ENCODE measurements at regions of chr2 and their contacts with region 1.

Region 1: GRCh38 chr2:95389245-95390119 is 13.0 kb upstream of the FAHD2A start:
- DNase-seq: peak; percentile 49
- ATAC-seq: peak; percentile 97
- H3K4me3 ChIP-seq: no peak overlapping the region
- H3K27ac ChIP-seq: no peak overlapping the region
- H3K4me1 ChIP-seq: no peaks in the 10 kb centered on the region
- H3K27me3 ChIP-seq: peaks cover 2% of the 10 kb centered on the region; the same call in 1 of the 2 replicates
- CTCF ChIP-seq: peak; percentile 91
- POLR2A ChIP-seq: no peak
- RAD21 ChIP-seq: peak; percentile 83

Region 2: DNA sequence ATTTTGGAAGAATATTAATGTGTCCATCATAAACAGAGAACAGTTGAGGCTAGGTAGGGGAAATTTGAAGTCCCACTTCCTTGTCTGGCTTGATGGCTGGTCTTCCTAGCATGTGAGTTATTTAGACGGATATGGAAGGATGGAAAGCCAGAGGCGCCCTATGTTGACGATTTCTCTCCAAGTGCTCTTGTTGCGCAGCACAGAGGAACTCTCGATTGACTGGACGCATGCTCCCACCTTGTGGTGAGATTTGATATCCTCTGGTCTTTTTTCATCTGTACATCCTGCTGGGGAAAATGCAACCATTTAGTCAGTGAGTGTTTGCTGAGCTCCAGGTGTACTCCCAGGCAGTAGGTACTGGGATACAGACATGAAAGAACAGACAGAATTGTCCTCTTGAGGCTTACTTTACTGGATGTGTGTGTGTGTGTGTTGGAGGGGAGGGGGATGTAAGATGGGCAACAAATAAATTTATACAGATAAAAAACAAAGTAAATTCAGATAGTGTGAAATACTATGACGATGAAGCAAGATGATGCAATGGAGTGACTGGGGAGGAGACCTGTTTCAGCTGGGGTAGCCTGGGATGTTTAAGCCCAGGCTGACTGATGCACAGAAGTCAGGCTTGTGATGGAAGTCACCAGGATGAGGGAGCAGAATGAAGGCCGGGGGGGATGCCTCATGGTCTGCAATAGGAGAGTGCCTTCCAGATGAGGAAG is 339.6 kb after region 1 on chr2:
- CTCF ChIA-PET with region 1: interaction called, 9 read pairs
- POLR2A ChIA-PET with region 1: no interaction called
- dilution Hi-C with region 1: no loop called
- in situ Hi-C with region 1: no loop called
- intact Hi-C with region 1: loop called (anchors 1 kb)
- DNase-seq: peak; percentile 89
- ATAC-seq: peak; percentile 98
- H3K4me3 ChIP-seq: no peak overlapping the region
- H3K27ac ChIP-seq: no peak overlapping the region
- H3K4me1 ChIP-seq: no peaks in the 10 kb centered on the region
- H3K27me3 ChIP-seq: no peaks in the 10 kb centered on the region; the same call in 1 of the 2 replicates
- CTCF ChIP-seq: peak; percentile 83
- POLR2A ChIP-seq: peak; percentile 46; the same call in 1 of the 2 replicates
- RAD21 ChIP-seq: peak; percentile 95